Head of caudate nucleus (tissue), 42 donors: ENCODE measurements at regions of chr5 and their contacts with region 1.

Region 1: DNA sequence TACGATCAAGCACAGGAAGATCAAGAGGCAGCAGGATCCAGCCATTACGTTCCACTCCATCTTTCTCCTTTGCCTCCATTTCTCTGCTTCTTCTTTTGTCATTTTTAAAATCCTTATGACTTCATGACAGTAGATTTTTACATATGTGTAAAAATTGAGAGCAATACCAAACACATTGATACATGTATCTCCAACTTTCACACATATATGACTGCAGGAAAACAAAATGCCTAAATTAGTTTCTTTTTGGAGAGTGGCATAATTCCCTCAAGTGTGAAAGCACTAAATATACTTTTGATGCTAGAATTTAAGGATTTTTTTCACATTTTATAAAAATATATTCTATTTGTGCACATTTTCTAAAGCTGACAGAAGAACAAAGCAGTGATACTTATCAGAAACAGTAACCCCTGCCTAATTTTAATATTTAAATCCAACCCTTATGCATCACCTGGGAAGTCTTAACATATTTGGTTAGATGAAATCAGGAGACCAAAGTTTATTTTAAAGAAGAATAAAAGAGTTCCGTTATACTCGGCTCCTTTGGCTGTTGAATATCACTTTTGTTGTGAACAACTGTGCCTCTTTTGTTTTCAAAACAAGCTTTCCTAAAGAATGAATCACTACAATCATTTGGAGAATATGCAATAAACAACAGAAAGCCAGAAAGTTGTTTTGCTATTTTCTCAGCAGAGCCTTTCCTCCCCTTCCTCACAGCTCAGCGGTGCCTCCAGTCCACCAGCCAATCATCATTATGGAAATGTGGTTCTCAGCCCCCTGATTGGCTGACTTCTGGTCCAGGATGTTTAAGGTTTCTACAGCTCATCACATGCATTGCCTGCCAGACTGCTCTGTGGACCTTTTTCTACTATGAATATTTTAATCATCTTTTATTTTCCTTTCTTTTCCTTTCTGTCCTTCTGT is 8.9 kb upstream of the ZNF608 start:
- DNase-seq: peak in 40 of 42 donors; percentile 28 to 88 (median 66)

Region 2: GRCh38 chr5:123594434-123594833 is 1160.9 kb before region 1 on chr5:
- intact Hi-C with region 1: no loop called
- DNase-seq: no peak

Region 3: DNA sequence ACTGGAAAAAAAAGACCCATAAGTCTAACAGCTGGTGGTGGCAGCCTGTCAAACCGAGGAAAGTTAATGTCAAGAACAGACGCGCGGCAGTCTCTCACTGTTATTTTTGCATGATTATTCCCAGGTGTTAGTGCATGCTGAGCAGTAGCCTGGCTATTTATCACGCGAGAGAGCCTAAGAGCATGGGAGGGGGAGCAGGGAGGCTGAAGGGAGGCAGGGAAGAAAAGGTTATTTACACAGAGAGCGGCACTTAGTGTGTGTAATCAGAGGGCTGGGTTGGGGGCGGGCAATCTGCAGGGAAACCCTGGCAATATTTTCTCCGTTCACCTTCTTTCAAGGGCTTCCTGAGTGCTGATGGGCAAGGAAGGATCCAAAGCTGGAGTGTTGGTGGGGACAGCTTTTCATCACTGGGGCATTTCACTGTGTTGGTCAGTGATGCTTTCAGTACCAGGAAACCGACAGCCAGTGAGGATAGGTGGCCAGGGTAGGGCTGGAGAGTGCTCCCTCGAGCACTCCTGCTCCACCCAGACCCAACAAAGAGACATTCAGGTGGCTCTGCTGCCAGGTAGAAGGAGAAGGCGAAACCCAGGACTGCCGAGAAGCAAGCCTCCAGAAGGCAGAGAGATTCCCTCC is 48.5 kb before region 1 on chr5:
- intact Hi-C with region 1: no loop called
- DNase-seq: no peak

Region 4: DNA sequence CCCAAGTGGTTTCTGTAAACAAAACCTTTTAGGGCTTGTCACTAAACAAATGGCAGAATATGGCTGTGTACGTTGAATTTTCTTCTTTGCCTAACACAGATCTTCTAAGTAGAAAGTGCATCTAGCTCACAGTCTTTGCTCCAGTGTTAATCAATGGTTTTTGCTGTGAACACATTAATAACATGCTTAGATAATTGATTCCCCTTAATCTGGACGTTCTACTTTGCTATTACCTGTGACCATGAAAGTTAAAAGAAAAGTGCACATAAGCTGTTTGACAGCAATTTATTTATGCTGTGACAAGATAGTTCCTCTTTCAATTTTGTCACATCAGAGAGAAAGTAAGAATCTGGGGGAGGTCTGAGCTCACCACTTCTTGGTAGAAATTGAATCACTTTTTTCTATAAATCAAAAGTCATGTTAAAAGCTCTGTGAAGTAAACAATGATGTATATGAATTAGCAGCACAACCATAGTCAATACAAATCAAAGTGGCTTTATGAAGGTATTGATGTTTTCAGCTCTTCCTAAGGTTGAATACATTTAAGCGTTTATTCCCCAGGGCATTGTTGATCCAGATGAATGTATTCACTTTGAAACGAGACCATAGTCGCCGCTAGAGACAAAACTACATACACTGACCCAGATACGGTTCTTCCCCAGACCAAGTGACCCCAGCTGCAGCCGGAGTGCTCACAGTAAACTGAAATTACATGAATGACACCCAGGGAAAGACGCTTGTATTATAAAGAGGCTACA is 165.8 kb after region 1 on chr5:
- intact Hi-C with region 1: loop called (anchors 5 kb)
- DNase-seq: peak in 13 of 42 donors; percentile 6 to 55 (median 35)

Region 5: DNA sequence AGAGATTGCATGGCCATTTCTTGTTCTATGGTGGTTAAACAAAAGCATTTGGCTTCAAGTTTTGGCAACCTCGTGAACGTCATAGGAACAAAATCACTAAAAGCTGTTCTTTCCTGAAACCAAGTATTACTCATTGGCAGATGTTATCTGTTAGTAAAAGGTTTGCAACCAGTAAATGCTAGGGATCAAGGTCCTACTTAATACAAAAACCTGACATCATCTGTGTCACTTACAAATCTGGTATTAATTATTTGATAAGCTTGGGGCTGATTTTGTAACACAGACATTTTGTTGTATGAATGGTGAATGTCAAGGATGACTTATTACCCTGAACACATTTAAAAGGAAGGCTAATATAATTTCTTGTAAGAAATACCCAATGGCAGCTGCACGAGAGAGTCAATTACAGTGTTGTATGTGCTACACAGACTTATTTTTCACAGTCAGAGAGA is 477.5 kb after region 1 on chr5:
- intact Hi-C with region 1: no loop called
- DNase-seq: no peak